ENCODE measurements at regions of chr22 and their contacts with region 1.

Region 1: GRCh38 chr22:41070665-41071331 is 21.6 kb upstream of the EP300 start:
- DNase-seq: no peak
- ATAC-seq: no peak
- H3K4me3 Mint-ChIP-seq: no peak overlapping the region
- H3K27ac Mint-ChIP-seq: no peak overlapping the region
- H3K4me1 Mint-ChIP-seq: peaks cover 33% of the 10 kb centered on the region
- H3K27me3 Mint-ChIP-seq: no peaks in the 10 kb centered on the region
- CTCF ChIP-seq: no peak

Region 2: DNA sequence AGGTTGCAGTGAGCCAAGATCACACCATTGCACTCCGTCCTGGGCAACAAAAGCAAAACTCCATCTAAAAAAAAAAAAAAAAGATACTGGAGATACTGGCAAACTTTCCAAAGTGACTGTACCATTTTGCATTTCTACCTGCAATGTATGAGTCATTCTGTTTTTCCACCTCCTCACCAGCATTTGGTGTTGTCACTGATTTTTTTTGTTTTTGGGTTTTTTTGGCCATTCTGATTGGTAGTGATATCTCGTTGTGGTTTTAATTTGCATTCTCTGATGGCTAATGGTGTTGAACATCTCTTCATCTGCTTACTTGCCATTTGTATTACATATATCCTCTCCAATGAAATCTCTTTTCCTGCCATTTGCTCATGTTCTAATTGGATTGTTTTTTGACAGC is 131.6 kb before region 1 on chr22:
- CTCF ChIA-PET with region 1: no interaction called
- POLR2A ChIA-PET with region 1: interaction called, 10 read pairs
- intact Hi-C with region 1: no loop called
- DNase-seq: no peak
- ATAC-seq: peak; percentile 9
- H3K4me3 Mint-ChIP-seq: peak overlapping the region; percentile 13
- H3K27ac Mint-ChIP-seq: peak overlapping the region; percentile 16
- H3K4me1 Mint-ChIP-seq: peaks cover 40% of the 10 kb centered on the region
- H3K27me3 Mint-ChIP-seq: no peaks in the 10 kb centered on the region
- CTCF ChIP-seq: no peak

Region 3: GRCh38 chr22:41001722-41002122 is 69.1 kb before region 1 on chr22:
- CTCF ChIA-PET with region 1: no interaction called
- POLR2A ChIA-PET with region 1: no interaction called
- intact Hi-C with region 1: no loop called
- DNase-seq: no peak
- ATAC-seq: no peak
- H3K4me3 Mint-ChIP-seq: no peak overlapping the region
- H3K27ac Mint-ChIP-seq: no peak overlapping the region
- H3K4me1 Mint-ChIP-seq: no peaks in the 10 kb centered on the region
- H3K27me3 Mint-ChIP-seq: no peaks in the 10 kb centered on the region
- CTCF ChIP-seq: no peak

Region 4: DNA sequence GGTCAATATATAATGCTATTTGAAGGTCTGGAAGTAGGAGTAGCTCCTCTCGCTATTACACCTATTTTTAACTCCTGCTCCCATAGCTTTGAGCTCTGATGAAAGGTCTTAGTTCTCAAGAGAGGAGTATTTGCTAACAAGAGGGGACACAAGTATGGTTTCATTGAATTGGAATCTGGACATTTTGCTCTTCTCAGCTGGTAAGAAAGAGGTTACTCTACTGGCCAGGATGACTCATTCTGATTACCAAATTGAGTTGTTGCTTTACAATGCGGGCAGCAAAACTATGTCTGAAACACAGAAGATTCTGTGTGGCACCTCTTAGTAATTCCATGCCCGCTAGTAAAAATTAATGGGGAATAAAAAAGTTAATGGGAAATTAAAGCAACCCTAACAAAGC is 42.0 kb before region 1 on chr22:
- CTCF ChIA-PET with region 1: no interaction called
- POLR2A ChIA-PET with region 1: no interaction called
- intact Hi-C with region 1: no loop called
- DNase-seq: no peak
- ATAC-seq: no peak
- H3K4me3 Mint-ChIP-seq: no peak overlapping the region
- H3K27ac Mint-ChIP-seq: no peak overlapping the region
- H3K4me1 Mint-ChIP-seq: no peaks in the 10 kb centered on the region
- H3K27me3 Mint-ChIP-seq: no peaks in the 10 kb centered on the region
- CTCF ChIP-seq: no peak

Region 5: DNA sequence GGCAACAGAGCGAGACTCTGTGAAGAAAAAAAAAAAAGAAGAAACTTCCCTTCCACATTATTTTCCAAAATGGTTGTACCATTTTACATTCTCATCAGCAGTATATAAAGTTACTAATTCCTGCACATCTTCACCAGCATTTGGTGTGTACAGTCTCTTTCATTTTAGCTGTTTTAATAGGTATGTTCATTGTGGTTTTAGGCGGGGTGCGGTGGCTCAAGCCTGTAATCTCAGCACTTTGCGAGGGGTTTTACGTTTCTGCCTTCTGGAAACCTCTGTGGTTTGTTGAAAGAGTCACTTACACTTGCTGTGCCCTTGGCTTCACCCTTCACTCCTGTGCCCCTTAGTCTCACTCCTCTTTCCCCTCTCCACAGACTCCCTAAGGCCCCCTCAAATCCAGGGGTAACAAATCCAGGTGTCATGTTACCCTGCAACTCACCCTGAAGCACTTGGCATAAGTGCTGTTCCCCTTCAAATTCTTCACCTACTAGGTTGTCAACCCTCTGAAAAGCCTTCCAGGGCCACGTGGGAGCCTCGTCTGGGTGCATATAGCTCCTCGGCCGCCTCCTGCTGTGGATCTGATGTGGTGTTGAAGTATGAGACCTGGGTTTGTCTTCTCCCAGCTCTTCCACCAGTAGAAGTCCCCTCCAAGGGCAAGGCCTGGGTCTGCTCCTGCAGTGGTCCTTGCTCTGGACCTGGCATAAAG is 355.0 kb after region 1 on chr22:
- CTCF ChIA-PET with region 1: no interaction called
- POLR2A ChIA-PET with region 1: interaction called, 11 read pairs
- intact Hi-C with region 1: no loop called
- DNase-seq: no peak
- ATAC-seq: peak; percentile 63
- H3K4me3 Mint-ChIP-seq: peak overlapping the region; percentile 25
- H3K27ac Mint-ChIP-seq: peak overlapping the region; percentile 73
- H3K4me1 Mint-ChIP-seq: peaks cover 46% of the 10 kb centered on the region
- H3K27me3 Mint-ChIP-seq: no peaks in the 10 kb centered on the region
- CTCF ChIP-seq: no peak